PC-9 (cell line): ENCODE measurements at regions of chr1 and their contacts with region 1.

Region 1: GRCh38 chr1:198681831-198682759 is 43.3 kb downstream of the PTPRC start:
- DNase-seq: peak; percentile 66 to 75
- H3K4me3 ChIP-seq: peak overlapping the region; percentile 32; the same call in 1 of the 2 replicates
- H3K27ac ChIP-seq: peak overlapping the region; percentile 55
- H3K4me1 ChIP-seq: peaks cover 11% of the 10 kb centered on the region
- H3K27me3 ChIP-seq: no peaks in the 10 kb centered on the region
- CTCF ChIP-seq: no peak

Region 2: GRCh38 chr1:197521118-197521739 is 1160.9 kb before region 1 on chr1:
- CTCF ChIA-PET with region 1: no interaction called
- POLR2A ChIA-PET with region 1: no interaction called
- intact Hi-C with region 1: loop called (anchors 5 kb)
- DNase-seq: peak in 1 of 2 experiments; percentile 1
- H3K4me3 ChIP-seq: no peak overlapping the region
- H3K27ac ChIP-seq: no peak overlapping the region
- H3K4me1 ChIP-seq: no peaks in the 10 kb centered on the region
- H3K27me3 ChIP-seq: no peaks in the 10 kb centered on the region
- CTCF ChIP-seq: peak; percentile 77

Region 3: DNA sequence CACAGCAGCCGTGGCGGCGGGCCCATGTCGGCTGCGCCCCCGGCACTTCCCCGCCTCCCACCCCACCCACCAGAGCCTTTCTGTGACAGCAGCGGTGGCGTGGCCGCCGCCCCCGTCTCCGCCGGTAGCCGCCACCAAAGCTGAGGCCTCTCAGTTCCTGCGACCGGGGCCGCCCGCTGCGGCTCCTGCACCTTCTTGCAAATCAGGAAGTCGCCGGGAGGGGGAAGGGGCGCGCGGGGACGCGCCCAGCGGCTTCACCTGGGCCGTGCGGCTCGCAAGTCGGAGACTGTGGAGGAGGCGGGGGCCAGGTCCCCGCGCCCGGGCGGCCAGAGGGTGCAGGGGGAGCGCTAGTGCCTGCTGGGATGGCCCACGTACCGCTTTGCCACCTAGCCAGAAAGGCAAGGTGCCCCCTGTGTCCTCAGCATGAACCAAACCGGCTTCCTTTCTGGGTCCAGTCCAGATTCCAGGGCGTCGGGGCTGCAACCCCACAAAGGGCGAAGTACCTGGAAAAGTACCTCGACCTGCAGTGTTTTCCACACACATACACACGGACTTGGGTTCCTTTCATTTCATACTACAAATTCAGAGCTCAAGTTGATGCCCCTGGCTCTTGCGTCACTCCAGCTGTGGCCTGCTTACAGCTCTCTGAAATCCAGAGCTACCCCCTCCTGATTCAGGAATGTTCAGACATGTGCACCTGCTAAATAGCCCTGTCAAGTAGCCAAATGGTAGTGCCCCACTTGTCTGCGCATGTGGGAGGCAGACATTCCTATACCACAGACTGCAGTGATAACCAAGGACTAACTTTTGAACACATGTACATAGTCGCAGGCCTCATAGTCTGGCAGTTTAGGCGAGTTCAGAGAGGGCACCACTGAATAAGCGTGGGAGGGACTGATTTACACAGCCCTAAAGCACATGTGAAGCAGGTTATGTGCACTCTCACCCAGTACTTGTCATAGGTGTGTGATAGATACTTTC is 906.5 kb before region 1 on chr1 and contains the start of gene DENND1B:
- CTCF ChIA-PET with region 1: no interaction called
- POLR2A ChIA-PET with region 1: no interaction called
- intact Hi-C with region 1: loop called (anchors 10 kb)
- DNase-seq: peak; percentile 78 to 80
- H3K4me3 ChIP-seq: peak within 1 kb of the TSS; percentile 97
- H3K27ac ChIP-seq: peak within 1 kb of the TSS; percentile 95
- H3K4me1 ChIP-seq: peaks cover 48% of the 10 kb centered on the region
- H3K27me3 ChIP-seq: no peaks in the 10 kb centered on the region
- CTCF ChIP-seq: peak; percentile 37; the same call in 1 of the 2 replicates
- total RNA-seq, gene DENND1B: 12.7 and 14.1 TPM in 2 replicates

Region 4: DNA sequence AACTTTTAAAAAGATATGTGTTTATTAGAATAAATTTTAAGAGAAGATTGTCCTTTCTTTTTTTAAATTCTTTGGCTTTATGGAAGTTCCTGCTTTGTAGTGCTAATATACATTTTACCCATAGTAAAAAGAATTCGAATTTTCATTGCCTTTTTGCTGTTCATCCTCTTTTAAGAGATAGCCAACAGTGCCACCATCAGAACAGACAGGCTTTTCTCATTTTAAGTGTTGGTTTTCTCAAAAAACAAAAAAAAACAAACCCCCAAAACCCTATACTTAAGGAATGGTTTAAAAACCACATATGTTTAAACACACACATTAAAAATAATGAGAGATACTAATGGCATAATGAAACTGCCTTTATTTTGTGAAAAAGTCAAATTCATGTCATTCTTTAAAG is 406.5 kb before region 1 on chr1:
- CTCF ChIA-PET with region 1: no interaction called
- POLR2A ChIA-PET with region 1: no interaction called
- intact Hi-C with region 1: loop called (anchors 5 kb)
- DNase-seq: no peak
- H3K4me3 ChIP-seq: no peak overlapping the region
- H3K27ac ChIP-seq: no peak overlapping the region
- H3K4me1 ChIP-seq: no peaks in the 10 kb centered on the region
- H3K27me3 ChIP-seq: no peaks in the 10 kb centered on the region
- CTCF ChIP-seq: no peak

Region 5: DNA sequence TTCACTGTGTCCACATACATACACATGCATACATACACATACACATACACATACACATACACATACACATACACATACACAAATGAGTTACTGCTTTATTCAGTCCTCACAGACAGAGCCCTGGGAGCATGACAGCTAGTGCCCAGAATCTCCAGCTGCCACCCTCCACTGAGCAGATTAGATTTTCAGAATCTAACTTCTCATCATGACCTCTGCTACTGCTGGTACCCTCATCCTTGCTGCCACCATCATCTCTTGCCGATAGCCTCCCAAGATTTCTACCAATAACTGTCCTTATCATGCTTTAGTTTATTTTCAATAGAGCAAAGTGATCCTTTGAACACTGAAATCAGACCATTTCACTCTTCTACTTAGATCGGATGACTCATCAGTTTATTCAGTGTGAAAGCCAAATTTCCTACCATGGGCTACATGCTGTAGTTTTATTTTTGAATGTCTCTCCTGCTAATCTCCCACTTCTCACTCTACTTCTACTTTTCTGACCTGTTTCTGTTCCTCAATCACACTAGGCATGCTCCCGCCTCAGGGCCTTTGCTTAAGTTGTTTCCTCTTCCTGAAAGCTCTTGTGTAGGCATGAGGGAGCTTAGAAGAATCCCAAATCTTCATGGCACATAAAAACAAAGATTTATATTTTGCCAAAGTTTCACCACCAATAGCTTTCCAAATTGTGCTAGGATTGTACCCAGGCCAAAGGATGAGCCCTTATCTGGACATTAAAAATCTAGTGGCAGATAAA is 184.6 kb before region 1 on chr1:
- CTCF ChIA-PET with region 1: interaction called, 3 read pairs
- POLR2A ChIA-PET with region 1: interaction called, 5 read pairs
- intact Hi-C with region 1: loop called (anchors 2 kb)
- DNase-seq: no peak
- H3K4me3 ChIP-seq: no peak overlapping the region
- H3K27ac ChIP-seq: 0 out of 2 replicates have a peak overlapping the region, but pooled peaks have one; percentile 10
- H3K4me1 ChIP-seq: peaks cover 41% of the 10 kb centered on the region
- H3K27me3 ChIP-seq: no peaks in the 10 kb centered on the region
- CTCF ChIP-seq: no peak

Region 6: DNA sequence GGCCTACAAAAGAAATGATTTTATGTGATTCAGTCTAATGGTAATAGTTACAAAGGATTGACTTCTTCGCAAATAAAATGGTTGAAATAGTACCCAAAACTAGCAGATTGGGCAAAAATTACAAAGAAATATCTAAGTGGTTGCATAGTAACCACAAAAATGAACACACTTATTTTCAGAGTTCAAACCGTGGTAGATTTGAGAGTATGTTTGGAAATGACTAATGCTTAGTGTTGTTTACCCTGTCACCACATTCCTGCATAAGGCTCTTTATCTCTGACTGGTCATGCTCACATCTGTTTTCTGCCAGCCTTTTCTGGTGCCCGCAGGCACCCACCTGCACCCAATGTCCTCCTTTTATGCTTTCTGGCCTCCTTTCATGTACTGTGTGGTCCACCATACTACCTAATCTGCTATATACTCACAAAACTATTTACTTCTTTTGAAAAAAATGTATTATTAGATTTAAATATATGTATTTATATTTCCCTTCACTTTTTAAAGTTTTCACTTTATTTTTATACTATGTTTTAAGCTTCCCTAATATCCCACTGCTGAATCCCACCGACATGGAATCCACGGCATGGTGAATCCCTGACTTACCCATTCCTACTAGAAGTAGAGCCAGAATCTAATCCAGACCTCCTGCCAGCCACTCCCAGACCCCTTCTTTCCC is 12.9 kb before region 1 on chr1:
- CTCF ChIA-PET with region 1: interaction called, 5 read pairs
- POLR2A ChIA-PET with region 1: interaction called, 13 read pairs
- intact Hi-C with region 1: no loop called
- DNase-seq: peak; percentile 63 to 82
- H3K4me3 ChIP-seq: no peak overlapping the region
- H3K27ac ChIP-seq: peak overlapping the region; percentile 36
- H3K4me1 ChIP-seq: peaks cover 25% of the 10 kb centered on the region
- H3K27me3 ChIP-seq: no peaks in the 10 kb centered on the region
- CTCF ChIP-seq: no peak

Region 7: DNA sequence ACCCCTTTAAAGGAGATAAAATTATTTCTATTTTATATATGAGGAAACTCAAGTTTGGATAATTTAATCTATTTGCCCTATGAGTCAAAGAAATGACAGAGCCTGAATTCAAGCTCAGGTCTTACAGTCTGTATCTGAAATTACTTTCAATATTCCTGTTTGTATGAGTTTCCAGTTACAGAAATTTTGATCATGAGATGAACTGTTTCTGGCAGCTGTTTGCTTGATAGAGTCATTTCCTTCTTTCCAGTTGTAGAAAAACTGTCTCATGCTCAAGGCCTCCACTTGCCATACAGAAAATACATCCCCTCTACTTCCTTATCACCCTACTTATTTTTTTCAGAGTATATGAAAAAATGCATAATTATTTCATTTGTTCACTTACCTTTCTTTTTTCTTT is 44.4 kb after region 1 on chr1:
- CTCF ChIA-PET with region 1: no interaction called
- POLR2A ChIA-PET with region 1: no interaction called
- intact Hi-C with region 1: no loop called
- DNase-seq: no peak
- H3K4me3 ChIP-seq: no peak overlapping the region
- H3K27ac ChIP-seq: no peak overlapping the region
- H3K4me1 ChIP-seq: no peaks in the 10 kb centered on the region
- H3K27me3 ChIP-seq: no peaks in the 10 kb centered on the region
- CTCF ChIP-seq: no peak

Region 8: GRCh38 chr1:198741744-198742143 is 59.6 kb after region 1 on chr1:
- CTCF ChIA-PET with region 1: no interaction called
- POLR2A ChIA-PET with region 1: no interaction called
- intact Hi-C with region 1: no loop called
- DNase-seq: no peak
- H3K4me3 ChIP-seq: no peak overlapping the region
- H3K27ac ChIP-seq: no peak overlapping the region
- H3K4me1 ChIP-seq: no peaks in the 10 kb centered on the region
- H3K27me3 ChIP-seq: no peaks in the 10 kb centered on the region
- CTCF ChIP-seq: no peak

Region 9: DNA sequence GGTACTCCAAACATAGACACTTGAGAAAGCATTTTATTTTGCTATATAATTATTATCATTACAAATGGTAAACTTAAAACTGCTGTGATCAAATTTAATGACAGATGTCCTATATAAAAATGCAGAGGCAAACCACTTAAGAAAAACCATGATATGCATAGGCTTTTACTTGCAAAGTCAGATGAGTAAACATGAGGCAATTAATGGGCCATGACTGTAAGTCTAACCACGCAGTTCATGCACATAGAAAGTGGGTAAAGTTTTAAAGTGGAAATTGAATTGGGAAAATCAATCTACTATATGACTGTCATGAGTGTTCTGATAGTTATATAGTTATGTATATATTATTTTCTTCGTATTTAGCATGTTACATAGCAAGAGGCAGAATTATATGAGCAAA is 175.9 kb after region 1 on chr1:
- CTCF ChIA-PET with region 1: no interaction called
- POLR2A ChIA-PET with region 1: no interaction called
- intact Hi-C with region 1: no loop called
- DNase-seq: no peak
- H3K4me3 ChIP-seq: no peak overlapping the region
- H3K27ac ChIP-seq: no peak overlapping the region
- H3K4me1 ChIP-seq: no peaks in the 10 kb centered on the region
- H3K27me3 ChIP-seq: no peaks in the 10 kb centered on the region
- CTCF ChIP-seq: no peak